Stomach (tissue), 19 donors: ENCODE measurements at regions of chr18 and their contacts with region 1.

Region 1: GRCh38 chr18:67199993-67200617 is 316.4 kb downstream of the DSEL start:
- DNase-seq: peak in 1 of 2 donors; percentile 82
- H3K4me3 ChIP-seq: no peak overlapping the region
- H3K27ac ChIP-seq: no peak overlapping the region
- H3K4me1 ChIP-seq: no peaks in the 10 kb centered on the region
- H3K27me3 ChIP-seq: peaks cover 0 to 9% (median 0%) of the 10 kb centered on the region in 3 donors
- CTCF ChIP-seq: peak in 5 of 7 experiments; percentile 47 to 53 (median 48)
- EP300 ChIP-seq: no peak
- POLR2A ChIP-seq: no peak

Region 2: GRCh38 chr18:67104700-67105284 is 95.3 kb before region 1 on chr18:
- intact Hi-C with region 1: loop called (anchors 5 kb)
- DNase-seq: peak; percentile 65 to 84
- H3K4me3 ChIP-seq: no peak overlapping the region
- H3K27ac ChIP-seq: no peak overlapping the region
- H3K4me1 ChIP-seq: no peaks in the 10 kb centered on the region
- H3K27me3 ChIP-seq: no peaks in the 10 kb centered on the region
- CTCF ChIP-seq: peak in 5 of 7 experiments; percentile 27 to 54 (median 45)
- EP300 ChIP-seq: no peak
- POLR2A ChIP-seq: no peak

Region 3: DNA sequence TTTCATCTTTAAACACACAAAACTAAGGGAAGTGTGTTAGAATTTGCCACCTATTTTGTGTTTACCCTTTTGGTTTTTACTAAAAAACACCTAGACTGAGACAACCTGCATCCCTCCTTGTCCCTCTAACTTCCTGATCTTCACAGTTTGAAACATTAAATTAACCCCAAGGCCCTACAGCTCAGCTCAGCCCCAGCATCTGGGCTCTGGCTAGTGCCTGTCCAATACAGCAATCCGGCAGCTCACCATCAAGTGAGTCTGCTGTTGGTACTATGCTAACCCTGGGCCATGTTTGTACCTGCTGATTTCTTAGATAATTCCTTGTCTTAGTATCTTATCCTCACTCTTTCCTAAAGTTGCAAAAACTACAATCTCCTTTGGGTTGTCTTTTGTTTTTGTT is 154.0 kb after region 1 on chr18:
- intact Hi-C with region 1: no loop called
- DNase-seq: no peak
- H3K4me3 ChIP-seq: no peak overlapping the region
- H3K27ac ChIP-seq: no peak overlapping the region
- H3K4me1 ChIP-seq: no peaks in the 10 kb centered on the region
- H3K27me3 ChIP-seq: no peaks in the 10 kb centered on the region
- CTCF ChIP-seq: no peak
- EP300 ChIP-seq: no peak
- POLR2A ChIP-seq: no peak